Gastrocnemius medialis (tissue), 4 donors: ENCODE measurements at regions of chr2 and their contacts with region 1.

Region 1: GRCh38 chr2:127415593-127416505 is 2.4 kb upstream of the PROC start:
- DNase-seq: peak; percentile 56 to 72
- ATAC-seq: peak; percentile 20 to 28
- H3K4me3 ChIP-seq: peak overlapping the region; percentile 32 to 66 (median 48)
- H3K27ac ChIP-seq: peak overlapping the region in 1 of 4 donors; percentile 95
- H3K4me1 ChIP-seq: peaks cover 16 to 21% of the 10 kb centered on the region in 2 donors
- H3K27me3 ChIP-seq: peaks cover 0 to 9% (median 0%) of the 10 kb centered on the region in 3 donors
- CTCF ChIP-seq: peak; percentile 68 to 87 (median 75)
- POLR2A ChIP-seq: peak in 1 of 2 donors; percentile 23

Region 2: DNA sequence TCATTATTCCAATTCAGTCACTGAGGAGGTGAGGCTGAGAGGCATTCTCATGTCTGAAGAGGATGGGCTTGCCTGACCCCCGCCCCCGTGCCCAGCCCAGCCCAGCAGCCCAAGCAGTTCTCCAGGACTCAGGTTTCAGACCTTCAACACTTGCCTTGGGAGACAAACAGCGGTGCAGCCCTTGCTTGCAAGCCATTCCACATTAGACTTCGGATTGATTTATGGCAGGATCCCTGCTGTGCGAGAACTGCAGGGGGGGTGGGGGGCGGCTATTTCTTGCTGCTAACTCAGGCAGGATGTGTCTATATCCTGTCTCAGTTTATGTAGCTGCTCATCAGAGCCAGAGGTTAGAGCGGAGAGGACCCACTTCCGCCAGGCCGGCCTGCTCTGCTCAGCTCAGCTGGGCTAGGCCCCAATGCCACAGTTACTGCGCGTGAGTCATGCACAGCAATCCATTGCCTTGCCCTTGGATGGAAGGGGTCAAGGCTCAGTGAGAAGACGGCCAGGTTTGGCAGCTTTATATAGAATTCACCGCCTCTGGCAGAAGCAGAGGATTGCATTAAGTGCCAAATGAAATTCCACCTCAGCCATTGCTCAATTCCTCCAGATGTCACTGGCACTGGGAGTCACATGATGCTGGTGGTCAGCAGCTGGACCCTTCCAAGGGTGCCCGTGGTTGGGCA is 758.1 kb before region 1 on chr2:
- in situ Hi-C with region 1: no loop called
- intact Hi-C with region 1: loop called (anchors 10 kb)
- DNase-seq: peak; percentile 87 to 95
- ATAC-seq: peak; percentile 75 to 79
- H3K4me3 ChIP-seq: peak overlapping the region; percentile 65 to 93 (median 80)
- H3K27ac ChIP-seq: peak overlapping the region; percentile 97 to 99 (median 99)
- H3K4me1 ChIP-seq: peaks cover 63 to 70% of the 10 kb centered on the region in 2 donors
- H3K27me3 ChIP-seq: no peaks in the 10 kb centered on the region
- CTCF ChIP-seq: peak in 2 of 5 experiments; percentile 5 to 37
- POLR2A ChIP-seq: peak; percentile 71 to 72

Region 3: GRCh38 chr2:126932966-126933710 is 482.7 kb before region 1 on chr2:
- in situ Hi-C with region 1: no loop called
- intact Hi-C with region 1: no loop called
- DNase-seq: no peak
- ATAC-seq: no peak
- H3K4me3 ChIP-seq: no peak overlapping the region
- H3K27ac ChIP-seq: no peak overlapping the region
- H3K4me1 ChIP-seq: no peaks in the 10 kb centered on the region
- H3K27me3 ChIP-seq: peaks cover 0 to 2% (median 0%) of the 10 kb centered on the region in 3 donors
- CTCF ChIP-seq: no peak
- POLR2A ChIP-seq: no peak

Region 4: DNA sequence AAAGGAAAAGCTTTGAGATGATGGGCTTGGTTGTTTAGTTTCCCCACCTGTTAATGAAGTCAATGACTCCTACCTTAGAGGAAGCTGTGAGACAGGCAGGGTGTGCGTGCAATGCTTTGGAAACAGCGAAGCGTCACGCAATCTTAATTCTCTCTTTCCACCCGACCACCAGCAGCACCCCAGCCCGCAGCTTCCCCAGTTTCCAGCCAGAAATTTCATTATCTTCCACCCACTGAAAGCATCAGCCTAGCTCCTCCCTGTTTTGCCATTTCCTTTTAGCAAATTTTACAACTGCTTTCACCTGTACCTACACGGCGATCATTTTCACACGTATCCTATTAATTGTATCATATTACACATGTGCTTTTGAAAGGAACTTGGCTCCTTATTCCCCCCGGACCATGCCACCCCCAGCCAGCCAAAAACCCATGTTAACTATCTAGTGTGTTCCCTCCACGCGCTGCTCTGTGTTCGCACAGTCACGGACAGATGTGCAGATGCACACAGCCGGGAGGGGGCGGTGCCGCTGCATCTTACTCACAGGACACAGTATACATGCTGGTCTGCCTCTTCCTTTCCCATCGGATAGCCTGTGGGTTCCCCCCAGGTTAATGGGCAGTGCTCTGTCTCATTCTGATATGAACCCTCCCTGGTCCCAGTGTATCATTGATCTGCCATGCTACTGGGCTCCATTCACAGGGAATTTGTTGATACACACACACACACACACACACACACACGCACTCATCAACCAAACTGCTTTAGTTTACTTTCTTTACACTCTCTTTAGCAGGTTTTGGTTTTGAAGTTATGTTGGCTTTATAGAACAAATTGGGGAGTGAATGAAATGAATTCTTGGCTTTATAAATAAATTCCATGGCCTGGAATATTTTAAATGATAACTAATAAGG is 218.1 kb before region 1 on chr2:
- in situ Hi-C with region 1: no loop called
- intact Hi-C with region 1: loop called (anchors 10 kb)
- DNase-seq: peak in 1 of 2 donors; percentile 65
- ATAC-seq: peak; percentile 28 to 53
- H3K4me3 ChIP-seq: no peak overlapping the region
- H3K27ac ChIP-seq: no peak overlapping the region
- H3K4me1 ChIP-seq: peaks cover 16 to 17% of the 10 kb centered on the region in 2 donors
- H3K27me3 ChIP-seq: no peaks in the 10 kb centered on the region
- CTCF ChIP-seq: peak; percentile 25 to 55 (median 49)
- POLR2A ChIP-seq: no peak

Region 5: GRCh38 chr2:127355386-127356008 is 60.4 kb before region 1 on chr2:
- in situ Hi-C with region 1: no loop called
- intact Hi-C with region 1: loop called (anchors 2 kb)
- DNase-seq: no peak
- ATAC-seq: peak in 1 of 2 donors; percentile 62
- H3K4me3 ChIP-seq: no peak overlapping the region
- H3K27ac ChIP-seq: no peak overlapping the region
- H3K4me1 ChIP-seq: peaks cover 35 to 40% of the 10 kb centered on the region in 2 donors
- H3K27me3 ChIP-seq: no peaks in the 10 kb centered on the region
- CTCF ChIP-seq: peak; percentile 49 to 69 (median 53)
- POLR2A ChIP-seq: no peak

Region 6: GRCh38 chr2:127508631-127509034 is 92.8 kb after region 1 on chr2:
- in situ Hi-C with region 1: no loop called
- intact Hi-C with region 1: loop called (anchors 2 kb)
- DNase-seq: peak; percentile 87 to 89
- ATAC-seq: peak; percentile 92 to 98
- H3K4me3 ChIP-seq: no peak overlapping the region
- H3K27ac ChIP-seq: peak overlapping the region; percentile 88 to 92 (median 90)
- H3K4me1 ChIP-seq: peaks cover 65% of the 10 kb centered on the region in 2 donors
- H3K27me3 ChIP-seq: no peaks in the 10 kb centered on the region
- CTCF ChIP-seq: no peak
- POLR2A ChIP-seq: no peak